ENCODE measurements at regions of chr6 and their contacts with region 1.

Region 1: GRCh38 chr6:24855395-24856245 is 56.9 kb upstream of the ARMH2 start:
- DNase-seq: peak; percentile 83
- ATAC-seq: peak; percentile 37
- H3K4me3 ChIP-seq: no peak overlapping the region
- H3K27ac ChIP-seq: no peak overlapping the region
- H3K4me1 ChIP-seq: peaks cover 17% of the 10 kb centered on the region
- H3K27me3 ChIP-seq: no peaks in the 10 kb centered on the region; the same call in 1 of the 2 replicates
- CTCF ChIP-seq: peak; percentile 92

Region 2: GRCh38 chr6:24929242-24929641 is 73.6 kb after region 1 on chr6:
- CTCF ChIA-PET with region 1: no interaction called
- POLR2A ChIA-PET with region 1: no interaction called
- intact Hi-C with region 1: loop called (anchors 5 kb)
- DNase-seq: no peak
- ATAC-seq: no peak
- H3K4me3 ChIP-seq: no peak overlapping the region
- H3K27ac ChIP-seq: no peak overlapping the region
- H3K4me1 ChIP-seq: peaks cover 47% of the 10 kb centered on the region
- H3K27me3 ChIP-seq: no peaks in the 10 kb centered on the region
- CTCF ChIP-seq: no peak

Region 3: GRCh38 chr6:25017932-25018567 is 162.4 kb after region 1 on chr6:
- CTCF ChIA-PET with region 1: interaction called, 11 read pairs
- POLR2A ChIA-PET with region 1: no interaction called
- intact Hi-C with region 1: no loop called
- DNase-seq: peak; percentile 79
- ATAC-seq: peak; percentile 73
- H3K4me3 ChIP-seq: no peak overlapping the region
- H3K27ac ChIP-seq: no peak overlapping the region; the same call in 1 of the 2 replicates
- H3K4me1 ChIP-seq: peaks cover 13% of the 10 kb centered on the region
- H3K27me3 ChIP-seq: no peaks in the 10 kb centered on the region
- CTCF ChIP-seq: peak; percentile 91

Region 4: DNA sequence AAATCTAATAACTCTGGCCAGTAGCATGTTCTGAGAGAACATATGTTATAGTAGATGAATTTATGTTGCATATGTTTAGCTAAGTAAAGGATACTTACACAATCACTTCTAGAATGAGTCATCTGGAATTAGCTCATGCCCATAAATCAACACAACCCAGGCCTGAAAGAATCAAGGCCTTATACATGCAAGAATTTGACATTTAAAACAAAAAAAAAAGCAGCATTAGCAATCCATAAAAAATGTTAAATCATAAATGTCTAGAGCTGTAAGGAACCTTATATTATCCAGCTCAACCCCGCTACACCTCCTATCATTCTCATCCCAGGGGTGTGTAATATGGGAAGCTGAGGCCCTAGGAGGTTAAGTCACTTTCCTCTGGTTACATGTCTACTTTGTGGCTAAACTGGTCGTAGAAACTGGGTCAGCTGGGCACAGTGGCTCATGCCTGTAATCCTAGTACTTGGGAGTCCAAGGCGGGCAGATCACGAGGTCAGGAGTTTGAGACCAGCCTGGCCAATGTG is 318.4 kb after region 1 on chr6:
- CTCF ChIA-PET with region 1: no interaction called
- POLR2A ChIA-PET with region 1: no interaction called
- intact Hi-C with region 1: loop called (anchors 10 kb)
- DNase-seq: peak; percentile 96
- ATAC-seq: peak; percentile 84
- H3K4me3 ChIP-seq: no peak overlapping the region
- H3K27ac ChIP-seq: peak overlapping the region; percentile 81
- H3K4me1 ChIP-seq: peaks cover 57% of the 10 kb centered on the region
- H3K27me3 ChIP-seq: no peaks in the 10 kb centered on the region
- CTCF ChIP-seq: no peak

Measured in PC-3 (cell line).